B cell (primary cell): ENCODE measurements at regions of chr5 and their contacts with region 1.

Region 1: DNA sequence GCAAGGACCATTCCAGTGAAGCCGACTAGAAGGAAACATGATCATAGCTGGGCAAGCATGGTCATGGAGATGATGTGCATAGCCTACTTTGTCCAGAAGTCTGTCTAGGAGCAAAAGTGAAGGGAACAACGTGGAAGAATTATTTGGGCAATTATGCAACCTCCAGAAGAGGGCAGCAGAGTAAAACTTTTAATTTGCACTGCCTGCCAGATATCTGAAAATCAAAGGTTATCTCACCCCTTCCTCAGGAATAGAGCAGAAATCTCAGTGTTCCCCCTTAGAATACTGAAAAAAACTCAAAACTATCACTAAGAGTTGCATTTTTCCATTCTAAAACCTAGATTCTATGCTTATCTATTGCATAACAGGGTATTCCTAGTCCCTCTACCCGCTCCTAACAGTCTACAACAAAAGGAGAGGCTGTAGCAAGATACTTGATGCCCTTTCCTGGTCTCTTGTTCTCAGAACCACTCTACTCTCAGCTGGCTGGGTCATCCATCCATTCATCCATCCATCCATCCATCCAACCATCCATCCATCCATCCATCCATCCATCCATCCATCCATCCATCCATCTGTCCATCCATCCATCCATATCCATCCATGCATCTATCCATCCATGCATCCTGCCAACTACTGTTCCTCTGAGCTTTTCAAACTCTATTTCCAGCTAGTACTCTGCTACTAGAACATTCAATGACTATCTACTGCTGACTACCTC is 8.4 kb upstream of the SETD9 start:
- DNase-seq: peak; percentile 73
- ATAC-seq: peak; percentile 67
- H3K4me3 ChIP-seq: no peak overlapping the region
- H3K4me3 Mint-ChIP-seq: no peak overlapping the region
- H3K27ac ChIP-seq: no peak overlapping the region
- H3K27ac Mint-ChIP-seq: no peak overlapping the region
- H3K4me1 ChIP-seq: peaks cover 4 to 8% of the 10 kb centered on the region in 2 donors
- H3K4me1 Mint-ChIP-seq: no peaks in the 10 kb centered on the region
- H3K27me3 ChIP-seq: no peaks in the 10 kb centered on the region
- H3K27me3 Mint-ChIP-seq: no peaks in the 10 kb centered on the region
- CTCF ChIP-seq: peak; percentile 96

Region 2: GRCh38 chr5:56264417-56265025 is 636.5 kb before region 1 on chr5:
- CTCF ChIA-PET with region 1: interaction called, 61 read pairs
- POLR2A ChIA-PET with region 1: no interaction called
- intact Hi-C with region 1: no loop called
- DNase-seq: peak; percentile 57
- ATAC-seq: peak; percentile 80
- H3K4me3 ChIP-seq: no peak overlapping the region
- H3K4me3 Mint-ChIP-seq: no peak overlapping the region
- H3K27ac ChIP-seq: no peak overlapping the region
- H3K27ac Mint-ChIP-seq: no peak overlapping the region
- H3K4me1 ChIP-seq: peaks cover 2 to 3% of the 10 kb centered on the region in 2 donors
- H3K4me1 Mint-ChIP-seq: peaks cover 2% of the 10 kb centered on the region
- H3K27me3 ChIP-seq: no peaks in the 10 kb centered on the region
- H3K27me3 Mint-ChIP-seq: peaks cover 5% of the 10 kb centered on the region
- CTCF ChIP-seq: peak; percentile 73

Region 3: DNA sequence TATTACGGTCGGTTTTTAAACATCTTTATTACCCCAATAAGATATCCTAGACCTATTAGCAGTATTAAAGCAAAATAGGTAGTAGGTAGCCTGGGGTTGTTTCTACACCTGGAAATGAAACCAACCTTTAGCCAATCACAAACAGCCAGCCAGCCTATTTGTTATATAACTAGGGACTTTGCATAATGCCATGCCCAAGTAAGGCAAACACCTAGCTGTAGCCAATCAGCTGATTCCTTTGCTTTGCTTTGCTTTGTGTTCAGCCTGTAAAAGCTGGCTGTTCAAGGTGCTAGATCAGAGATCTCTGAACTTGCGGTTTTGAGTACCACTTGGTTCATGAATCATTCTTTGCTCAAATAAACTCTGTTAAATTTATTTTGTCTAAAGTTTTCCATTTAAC is 38.1 kb before region 1 on chr5:
- CTCF ChIA-PET with region 1: no interaction called
- POLR2A ChIA-PET with region 1: interaction called, 18 read pairs
- intact Hi-C with region 1: no loop called
- DNase-seq: no peak
- ATAC-seq: no peak
- H3K4me3 ChIP-seq: no peak overlapping the region
- H3K4me3 Mint-ChIP-seq: no peak overlapping the region
- H3K27ac ChIP-seq: peak overlapping the region in 1 of 2 donors; percentile 11
- H3K27ac Mint-ChIP-seq: no peak overlapping the region
- H3K4me1 ChIP-seq: peaks cover 0 to 3% of the 10 kb centered on the region in 2 donors
- H3K4me1 Mint-ChIP-seq: peaks cover 18% of the 10 kb centered on the region
- H3K27me3 ChIP-seq: no peaks in the 10 kb centered on the region
- H3K27me3 Mint-ChIP-seq: no peaks in the 10 kb centered on the region
- CTCF ChIP-seq: no peak

Region 4: DNA sequence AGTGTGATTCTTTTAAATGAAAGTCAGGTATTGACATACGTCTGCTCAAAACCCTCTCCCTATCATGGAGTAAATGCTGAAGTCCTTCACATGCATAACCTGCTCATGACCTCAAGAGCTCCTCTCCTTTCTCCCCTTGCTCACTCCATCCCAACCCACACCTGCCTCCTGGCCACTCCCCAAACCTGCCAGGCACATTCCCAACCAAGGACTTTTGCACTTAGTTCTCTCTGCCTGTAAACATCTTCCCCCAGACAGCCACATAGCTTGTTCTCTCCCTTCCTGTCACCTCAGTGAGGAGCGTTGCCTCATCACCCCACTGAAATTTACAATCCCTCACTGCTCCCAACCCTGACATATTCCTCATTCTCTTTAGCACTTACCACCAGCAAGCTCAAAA is 17.0 kb after region 1 on chr5:
- CTCF ChIA-PET with region 1: interaction called, 44 read pairs
- POLR2A ChIA-PET with region 1: no interaction called
- intact Hi-C with region 1: no loop called
- DNase-seq: no peak
- ATAC-seq: no peak
- H3K4me3 ChIP-seq: no peak overlapping the region
- H3K4me3 Mint-ChIP-seq: no peak overlapping the region
- H3K27ac ChIP-seq: no peak overlapping the region
- H3K27ac Mint-ChIP-seq: no peak overlapping the region
- H3K4me1 ChIP-seq: no peaks in the 10 kb centered on the region
- H3K4me1 Mint-ChIP-seq: no peaks in the 10 kb centered on the region
- H3K27me3 ChIP-seq: no peaks in the 10 kb centered on the region
- H3K27me3 Mint-ChIP-seq: no peaks in the 10 kb centered on the region
- CTCF ChIP-seq: no peak

Region 5: DNA sequence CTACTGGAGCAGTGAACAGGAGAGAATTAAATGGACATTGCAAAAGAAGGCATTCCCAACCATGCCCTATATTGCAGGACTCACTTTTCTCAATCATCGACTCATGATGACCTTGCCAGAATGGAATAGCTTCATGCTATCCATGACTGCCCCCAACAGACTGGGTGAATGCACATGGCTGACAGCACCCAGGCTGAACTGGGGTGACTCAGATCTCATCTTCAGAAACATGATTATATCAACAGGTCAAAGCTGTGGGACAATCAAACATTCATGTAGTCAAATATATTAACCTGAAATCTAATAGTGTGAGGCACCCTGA is 85.6 kb after region 1 on chr5:
- CTCF ChIA-PET with region 1: no interaction called
- POLR2A ChIA-PET with region 1: no interaction called
- intact Hi-C with region 1: no loop called
- DNase-seq: peak; percentile 56
- ATAC-seq: peak; percentile 74
- H3K4me3 ChIP-seq: no peak overlapping the region
- H3K4me3 Mint-ChIP-seq: peak overlapping the region; percentile 2
- H3K27ac ChIP-seq: no peak overlapping the region
- H3K27ac Mint-ChIP-seq: peak overlapping the region; percentile 51
- H3K4me1 ChIP-seq: peaks cover 10% of the 10 kb centered on the region in 2 donors
- H3K4me1 Mint-ChIP-seq: peaks cover 16% of the 10 kb centered on the region
- H3K27me3 ChIP-seq: no peaks in the 10 kb centered on the region
- H3K27me3 Mint-ChIP-seq: no peaks in the 10 kb centered on the region
- CTCF ChIP-seq: no peak

Region 6: GRCh38 chr5:57007344-57007743 is 106.3 kb after region 1 on chr5:
- CTCF ChIA-PET with region 1: no interaction called
- POLR2A ChIA-PET with region 1: no interaction called
- intact Hi-C with region 1: no loop called
- DNase-seq: peak; percentile 44
- ATAC-seq: peak; percentile 73
- H3K4me3 ChIP-seq: no peak overlapping the region
- H3K4me3 Mint-ChIP-seq: no peak overlapping the region
- H3K27ac ChIP-seq: no peak overlapping the region
- H3K27ac Mint-ChIP-seq: no peak overlapping the region
- H3K4me1 ChIP-seq: peaks cover 8 to 11% of the 10 kb centered on the region in 2 donors
- H3K4me1 Mint-ChIP-seq: peaks cover 13% of the 10 kb centered on the region
- H3K27me3 ChIP-seq: no peaks in the 10 kb centered on the region
- H3K27me3 Mint-ChIP-seq: no peaks in the 10 kb centered on the region
- CTCF ChIP-seq: no peak

Region 7: GRCh38 chr5:57032151-57032551 is 131.1 kb after region 1 on chr5:
- CTCF ChIA-PET with region 1: no interaction called
- POLR2A ChIA-PET with region 1: no interaction called
- intact Hi-C with region 1: loop called (anchors 2 kb)
- DNase-seq: no peak
- ATAC-seq: no peak
- H3K4me3 ChIP-seq: no peak overlapping the region
- H3K4me3 Mint-ChIP-seq: no peak overlapping the region
- H3K27ac ChIP-seq: no peak overlapping the region
- H3K27ac Mint-ChIP-seq: no peak overlapping the region
- H3K4me1 ChIP-seq: peaks cover 22 to 24% of the 10 kb centered on the region in 2 donors
- H3K4me1 Mint-ChIP-seq: peaks cover 23% of the 10 kb centered on the region
- H3K27me3 ChIP-seq: no peaks in the 10 kb centered on the region
- H3K27me3 Mint-ChIP-seq: peaks cover 4% of the 10 kb centered on the region
- CTCF ChIP-seq: no peak

Region 8: GRCh38 chr5:57221049-57221568 is 320.1 kb after region 1 on chr5:
- CTCF ChIA-PET with region 1: interaction called, 59 read pairs
- POLR2A ChIA-PET with region 1: no interaction called
- intact Hi-C with region 1: loop called (anchors 1 kb)
- DNase-seq: peak; percentile 82
- ATAC-seq: peak; percentile 65
- H3K4me3 ChIP-seq: no peak overlapping the region
- H3K4me3 Mint-ChIP-seq: peak overlapping the region; percentile 17
- H3K27ac ChIP-seq: peak overlapping the region in 1 of 2 donors; percentile 75
- H3K27ac Mint-ChIP-seq: peak overlapping the region; percentile 21
- H3K4me1 ChIP-seq: peaks cover 3 to 4% of the 10 kb centered on the region in 2 donors
- H3K4me1 Mint-ChIP-seq: peaks cover 33% of the 10 kb centered on the region
- H3K27me3 ChIP-seq: no peaks in the 10 kb centered on the region
- H3K27me3 Mint-ChIP-seq: no peaks in the 10 kb centered on the region
- CTCF ChIP-seq: peak; percentile 96

Region 9: GRCh38 chr5:57229313-57229712 is 328.3 kb after region 1 on chr5:
- CTCF ChIA-PET with region 1: interaction called, 11 read pairs
- POLR2A ChIA-PET with region 1: no interaction called
- intact Hi-C with region 1: no loop called
- DNase-seq: no peak
- ATAC-seq: no peak
- H3K4me3 ChIP-seq: no peak overlapping the region
- H3K4me3 Mint-ChIP-seq: no peak overlapping the region
- H3K27ac ChIP-seq: no peak overlapping the region
- H3K27ac Mint-ChIP-seq: peak overlapping the region; percentile 2
- H3K4me1 ChIP-seq: no peaks in the 10 kb centered on the region
- H3K4me1 Mint-ChIP-seq: peaks cover 13% of the 10 kb centered on the region
- H3K27me3 ChIP-seq: no peaks in the 10 kb centered on the region
- H3K27me3 Mint-ChIP-seq: no peaks in the 10 kb centered on the region
- CTCF ChIP-seq: no peak